ENCODE measurements at regions of chr2 and their contacts with region 1.

Region 1: DNA sequence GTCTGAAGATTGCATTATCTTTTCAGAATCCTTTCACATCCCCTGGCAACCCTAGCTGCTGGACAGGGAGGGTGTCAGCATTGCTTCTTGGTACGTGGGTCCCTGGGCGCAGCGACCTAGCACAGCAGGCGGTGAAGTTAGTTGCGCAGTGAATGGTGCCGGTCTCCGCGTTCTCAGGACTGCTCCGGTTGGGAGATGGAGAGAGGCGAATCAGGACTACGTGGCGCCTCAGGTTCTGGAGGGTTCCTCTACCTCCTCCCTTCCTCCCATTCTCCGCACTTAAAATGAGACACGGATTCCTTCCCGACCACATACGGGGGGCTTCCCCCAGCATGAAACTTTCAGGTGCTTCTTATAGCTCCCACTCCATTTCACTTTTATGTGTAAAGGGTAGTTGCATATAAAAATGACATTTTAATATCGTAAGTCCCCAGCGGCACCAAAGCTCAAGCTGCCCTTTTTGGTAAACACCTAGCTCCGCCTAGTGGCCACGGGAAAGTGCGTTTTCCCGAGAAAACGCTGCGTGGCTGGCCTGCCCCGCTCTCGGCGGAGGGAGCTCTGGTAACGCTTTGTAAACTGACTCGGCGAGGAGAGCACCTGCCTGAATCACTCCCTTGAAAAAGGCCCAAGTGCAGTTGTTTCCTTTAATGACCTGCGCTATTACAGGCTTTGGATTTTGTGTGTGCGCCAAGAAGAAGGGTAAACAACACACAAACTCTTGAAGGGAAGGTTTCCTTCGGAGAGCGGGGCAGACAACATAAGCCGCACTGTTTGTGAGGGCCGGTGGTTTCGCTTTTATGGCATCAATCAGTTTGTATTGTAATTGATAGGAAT is 32.9 kb upstream of the INHBB start:
- DNase-seq: peak; percentile 82
- H3K4me3 Mint-ChIP-seq: peak overlapping the region; percentile 46
- H3K27ac Mint-ChIP-seq: peak overlapping the region; percentile 56
- H3K4me1 Mint-ChIP-seq: peaks cover 35% of the 10 kb centered on the region
- H3K27me3 Mint-ChIP-seq: no peaks in the 10 kb centered on the region

Region 2: GRCh38 chr2:120223034-120223912 is 89.8 kb before region 1 on chr2 and contains the start of gene TMEM185B:
- CTCF ChIA-PET with region 1: interaction called, 18 read pairs
- POLR2A ChIA-PET with region 1: interaction called, 34 read pairs
- DNase-seq: peak; percentile 93
- H3K4me3 Mint-ChIP-seq: peak within 1 kb of the TSS; percentile 78
- H3K27ac Mint-ChIP-seq: peak within 1 kb of the TSS; percentile 83
- H3K4me1 Mint-ChIP-seq: peaks cover 65% of the 10 kb centered on the region
- H3K27me3 Mint-ChIP-seq: no peaks in the 10 kb centered on the region
- total RNA-seq, gene TMEM185B: 19.2 to 21.8 TPM

Region 3: GRCh38 chr2:120252225-120253021 is 60.7 kb before region 1 on chr2 and contains the start of gene RALB:
- CTCF ChIA-PET with region 1: interaction called, 48 read pairs
- POLR2A ChIA-PET with region 1: interaction called, 10 read pairs
- DNase-seq: peak; percentile 99
- H3K4me3 Mint-ChIP-seq: peak within 1 kb of the TSS; percentile 99
- H3K27ac Mint-ChIP-seq: peak within 1 kb of the TSS; percentile 85
- H3K4me1 Mint-ChIP-seq: peaks cover 64% of the 10 kb centered on the region
- H3K27me3 Mint-ChIP-seq: peaks cover 10% of the 10 kb centered on the region
- total RNA-seq, gene RALB: 59.2 to 59.3 TPM

Region 4: DNA sequence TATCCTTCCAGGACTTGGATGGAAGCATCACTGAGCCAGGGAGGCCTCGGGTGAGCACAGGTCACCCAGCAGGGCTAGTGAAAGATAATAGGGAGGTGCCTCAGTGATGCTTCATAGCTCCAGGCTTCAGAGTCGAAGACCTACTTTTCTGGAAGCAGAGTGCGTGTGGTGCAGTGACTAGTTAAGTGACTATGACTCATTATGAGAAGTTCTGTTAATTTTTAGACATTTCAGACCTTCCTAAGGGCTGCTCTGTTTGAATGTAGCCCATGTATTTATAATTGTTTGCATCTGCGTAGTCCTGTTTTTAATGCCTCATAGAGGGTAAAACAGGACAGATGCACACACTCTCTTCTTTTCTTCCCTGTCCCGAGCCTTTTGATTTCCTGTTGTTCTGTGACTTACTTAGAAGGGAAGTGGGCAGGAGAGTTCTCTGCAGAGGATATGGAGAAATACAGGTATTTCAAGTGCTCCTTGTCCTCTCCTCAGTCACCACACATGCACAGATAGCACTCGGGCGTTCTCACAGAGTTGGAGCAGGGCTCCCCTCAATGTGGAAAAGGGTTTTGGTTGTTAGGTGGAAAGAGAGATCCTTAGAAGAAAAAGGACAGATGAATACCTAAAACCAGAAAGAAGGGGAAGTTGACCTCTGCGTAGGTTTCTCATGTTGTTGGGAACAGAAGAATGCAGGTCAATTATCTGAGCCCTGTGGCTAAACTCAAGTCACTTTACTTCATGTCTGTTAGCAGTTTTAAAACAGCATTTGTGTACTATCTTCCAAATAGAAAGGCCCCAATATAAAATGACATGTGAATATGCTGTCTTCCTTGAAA is 25.7 kb before region 1 on chr2:
- CTCF ChIA-PET with region 1: interaction called, 71 read pairs
- POLR2A ChIA-PET with region 1: interaction called, 10 read pairs
- DNase-seq: peak; percentile 54
- H3K4me3 Mint-ChIP-seq: peak overlapping the region; percentile 43
- H3K27ac Mint-ChIP-seq: peak overlapping the region; percentile 89
- H3K4me1 Mint-ChIP-seq: peaks cover 75% of the 10 kb centered on the region
- H3K27me3 Mint-ChIP-seq: no peaks in the 10 kb centered on the region

Region 5: DNA sequence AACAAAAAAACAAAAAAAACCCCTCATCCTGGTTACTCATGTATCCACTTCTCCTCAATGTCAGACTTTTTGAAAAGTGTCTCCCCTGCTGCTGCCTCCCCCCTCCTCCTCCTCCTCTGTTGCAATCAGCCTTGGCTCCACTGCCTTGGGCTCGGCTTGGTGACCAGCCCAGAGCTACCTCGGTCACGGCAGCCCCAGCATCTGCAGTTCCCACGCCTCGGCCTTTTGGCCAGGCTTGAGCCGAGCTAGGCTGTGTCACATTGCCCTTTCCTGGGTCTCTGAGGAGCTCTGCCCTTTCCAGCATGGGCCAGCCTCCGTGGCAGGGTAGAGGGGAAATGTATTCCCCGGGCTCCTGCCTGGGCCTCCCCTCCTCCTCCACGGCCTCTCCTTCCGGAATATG is 10.1 kb after region 1 on chr2:
- CTCF ChIA-PET with region 1: interaction called, 14 read pairs
- POLR2A ChIA-PET with region 1: interaction called, 3 read pairs
- DNase-seq: no peak
- H3K4me3 Mint-ChIP-seq: no peak overlapping the region
- H3K27ac Mint-ChIP-seq: no peak overlapping the region
- H3K4me1 Mint-ChIP-seq: peaks cover 3% of the 10 kb centered on the region
- H3K27me3 Mint-ChIP-seq: peaks cover 3% of the 10 kb centered on the region

Region 6: GRCh38 chr2:120396013-120396885 is 83.2 kb after region 1 on chr2:
- CTCF ChIA-PET with region 1: no interaction called
- POLR2A ChIA-PET with region 1: no interaction called
- DNase-seq: peak; percentile 7
- H3K4me3 Mint-ChIP-seq: no peak overlapping the region
- H3K27ac Mint-ChIP-seq: no peak overlapping the region
- H3K4me1 Mint-ChIP-seq: no peaks in the 10 kb centered on the region
- H3K27me3 Mint-ChIP-seq: no peaks in the 10 kb centered on the region

Region 7: GRCh38 chr2:120520929-120521912 is 208.1 kb after region 1 on chr2:
- CTCF ChIA-PET with region 1: no interaction called
- POLR2A ChIA-PET with region 1: no interaction called
- DNase-seq: peak; percentile 43
- H3K4me3 Mint-ChIP-seq: no peak overlapping the region
- H3K27ac Mint-ChIP-seq: no peak overlapping the region
- H3K4me1 Mint-ChIP-seq: no peaks in the 10 kb centered on the region
- H3K27me3 Mint-ChIP-seq: peaks cover 12% of the 10 kb centered on the region

Measured in activated CD4-positive, alpha-beta memory T cell treated with anti-CD3 and anti-CD28 coated beads, Interleukin-2, amount 10 ng/mL, durations not matched to agents 7 days and 5 days (primary cell).